Right lobe of liver (tissue), 6 donors: ENCODE measurements at regions of chr19 and their contacts with region 1.

Region 1: GRCh38 chr19:5615756-5616332 is 6.7 kb downstream of the SAFB2 start:
- DNase-seq: no peak
- ATAC-seq: no peak
- H3K4me3 ChIP-seq: no peak overlapping the region
- H3K27ac ChIP-seq: no peak overlapping the region
- H3K4me1 ChIP-seq: peaks cover 0 to 19% (median 4%) of the 10 kb centered on the region in 4 donors
- H3K27me3 ChIP-seq: no peaks in the 10 kb centered on the region
- CTCF ChIP-seq: no peak
- POLR2A ChIP-seq: no peak

Region 2: DNA sequence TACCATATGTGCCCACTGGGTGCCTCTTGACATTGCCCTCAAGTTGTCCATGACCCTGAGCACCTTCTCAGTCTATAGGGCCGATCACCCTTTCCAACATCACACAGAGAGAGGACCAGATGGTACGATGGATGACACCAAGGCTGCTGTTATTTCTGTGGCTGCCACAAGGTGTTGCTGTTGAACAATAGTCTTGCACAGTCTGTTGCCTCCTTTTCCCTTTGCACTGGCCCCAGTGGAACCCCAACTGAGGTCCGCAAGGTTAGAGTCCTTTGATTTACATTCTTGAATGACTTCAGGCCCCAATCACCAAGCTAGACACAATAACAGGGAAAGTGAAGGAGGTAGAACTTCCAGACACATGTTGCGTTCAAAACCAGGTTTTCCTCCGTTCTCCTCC is 100.1 kb before region 1 on chr19:
- intact Hi-C with region 1: no loop called
- DNase-seq: no peak
- ATAC-seq: no peak
- H3K4me3 ChIP-seq: no peak overlapping the region
- H3K27ac ChIP-seq: no peak overlapping the region
- H3K4me1 ChIP-seq: no peaks in the 10 kb centered on the region
- H3K27me3 ChIP-seq: no peaks in the 10 kb centered on the region
- CTCF ChIP-seq: no peak
- POLR2A ChIP-seq: no peak

Region 3: GRCh38 chr19:5557691-5558090 is 58.2 kb before region 1 on chr19:
- intact Hi-C with region 1: no loop called
- DNase-seq: no peak
- ATAC-seq: no peak
- H3K4me3 ChIP-seq: no peak overlapping the region
- H3K27ac ChIP-seq: no peak overlapping the region
- H3K4me1 ChIP-seq: no peaks in the 10 kb centered on the region
- H3K27me3 ChIP-seq: no peaks in the 10 kb centered on the region
- CTCF ChIP-seq: no peak
- POLR2A ChIP-seq: no peak

Region 4: DNA sequence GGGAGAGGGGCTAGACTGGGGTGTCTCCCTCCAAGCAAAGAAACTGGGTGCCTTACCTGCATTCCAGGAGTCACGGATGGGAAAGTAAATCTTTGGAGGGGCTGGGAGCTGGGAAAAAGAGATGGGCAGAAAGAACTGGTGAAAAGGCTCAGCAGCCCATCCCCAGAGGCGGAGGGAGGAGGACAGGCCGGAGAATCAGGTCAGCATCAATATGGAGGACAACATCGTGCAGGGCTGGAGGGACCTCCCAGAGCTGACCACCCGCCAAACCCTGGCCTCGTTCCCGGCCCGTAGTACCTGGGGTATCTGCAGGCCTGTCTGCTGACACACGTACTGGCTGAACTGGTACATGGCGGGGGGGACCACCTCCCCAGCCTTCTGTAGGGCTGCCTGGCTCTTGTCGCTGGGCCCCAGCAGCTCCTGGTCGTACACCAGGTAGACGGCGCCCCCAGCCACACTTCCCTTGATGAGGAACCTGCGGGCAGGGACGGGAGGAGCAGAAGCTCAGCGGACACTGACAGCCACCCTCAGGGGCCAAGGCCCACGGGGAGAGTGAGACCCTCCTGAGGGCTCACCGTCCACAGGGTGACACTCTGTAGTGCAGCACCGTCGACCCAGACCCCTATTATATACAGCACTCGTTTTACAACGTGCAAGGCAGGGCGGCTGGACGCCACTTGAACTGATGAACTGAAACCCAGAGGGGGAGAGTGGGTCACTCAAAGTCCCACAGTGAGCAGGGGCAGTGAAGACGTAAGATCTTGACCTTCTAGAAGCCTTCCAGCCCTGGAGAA is 63.6 kb after region 1 on chr19:
- intact Hi-C with region 1: loop called in 1 of 2 experiments (anchors 10 kb)
- DNase-seq: no peak
- ATAC-seq: no peak
- H3K4me3 ChIP-seq: peak overlapping the region; percentile 62 to 97 (median 95)
- H3K27ac ChIP-seq: peak overlapping the region in 2 of 3 donors; percentile 72 to 82
- H3K4me1 ChIP-seq: peaks cover 0 to 6% (median 0%) of the 10 kb centered on the region in 4 donors
- H3K27me3 ChIP-seq: no peaks in the 10 kb centered on the region
- CTCF ChIP-seq: no peak
- POLR2A ChIP-seq: no peak

Region 5: GRCh38 chr19:5719961-5720790 is 104.3 kb after region 1 on chr19 and contains the starts of genes CATSPERD and LONP1:
- intact Hi-C with region 1: no loop called
- DNase-seq: peak; percentile 98 to 99 (median 99)
- ATAC-seq: peak; percentile 94 to 97 (median 96)
- H3K4me3 ChIP-seq: peak within 1 kb of the TSS; percentile 83 to 100 (median 85)
- H3K27ac ChIP-seq: peak within 1 kb of the TSS; percentile 82 to 90 (median 89)
- H3K4me1 ChIP-seq: peaks cover 2 to 14% (median 9%) of the 10 kb centered on the region in 4 donors
- H3K27me3 ChIP-seq: no peaks in the 10 kb centered on the region
- CTCF ChIP-seq: peak; percentile 86 to 90 (median 88)
- POLR2A ChIP-seq: peak; percentile 77
- total RNA-seq, gene CATSPERD: not detected
- total RNA-seq, gene LONP1: 54.5 to 123 (median 66.8) TPM

Region 6: DNA sequence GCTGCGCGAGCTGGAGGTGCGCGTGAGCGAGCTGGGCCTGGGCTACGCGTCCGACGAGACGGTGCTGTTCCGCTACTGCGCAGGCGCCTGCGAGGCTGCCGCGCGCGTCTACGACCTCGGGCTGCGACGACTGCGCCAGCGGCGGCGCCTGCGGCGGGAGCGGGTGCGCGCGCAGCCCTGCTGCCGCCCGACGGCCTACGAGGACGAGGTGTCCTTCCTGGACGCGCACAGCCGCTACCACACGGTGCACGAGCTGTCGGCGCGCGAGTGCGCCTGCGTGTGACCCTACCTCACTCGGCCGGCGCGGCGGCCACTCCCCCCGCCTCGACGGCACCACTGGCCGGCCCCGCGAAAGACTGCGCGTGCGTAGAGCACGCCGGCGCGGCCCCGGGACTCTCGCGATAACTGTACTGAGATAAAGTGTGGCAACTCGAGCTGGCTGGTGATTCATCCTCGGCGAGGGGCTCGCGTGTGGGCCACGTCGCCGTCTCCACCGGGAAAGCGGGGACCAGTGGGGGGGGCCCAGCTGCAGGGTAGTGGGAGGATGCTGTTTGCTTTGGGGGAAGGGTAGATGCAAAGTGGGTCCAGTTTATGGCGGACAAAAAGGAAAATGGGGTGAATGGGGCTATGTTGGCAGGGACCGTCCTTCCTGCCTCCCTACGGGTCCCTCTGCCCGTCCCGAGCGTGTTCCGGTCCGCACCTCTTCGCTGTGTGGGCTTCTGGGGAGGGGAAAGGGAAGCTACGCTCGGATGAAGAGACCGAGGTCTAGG is 212.2 kb after region 1 on chr19:
- intact Hi-C with region 1: no loop called
- DNase-seq: peak; percentile 94 to 95 (median 94)
- ATAC-seq: peak; percentile 69 to 83 (median 78)
- H3K4me3 ChIP-seq: peak overlapping the region; percentile 50 to 63 (median 59)
- H3K27ac ChIP-seq: peak overlapping the region; percentile 71 to 83 (median 76)
- H3K4me1 ChIP-seq: peaks cover 0 to 13% (median 4%) of the 10 kb centered on the region in 4 donors
- H3K27me3 ChIP-seq: no peaks in the 10 kb centered on the region
- CTCF ChIP-seq: peak in 1 of 4 donors; percentile 5
- POLR2A ChIP-seq: peak; percentile 99